Lower leg skin (tissue), 4 donors: ENCODE measurements at regions of chr13 and their contacts with region 1.

Region 1: DNA sequence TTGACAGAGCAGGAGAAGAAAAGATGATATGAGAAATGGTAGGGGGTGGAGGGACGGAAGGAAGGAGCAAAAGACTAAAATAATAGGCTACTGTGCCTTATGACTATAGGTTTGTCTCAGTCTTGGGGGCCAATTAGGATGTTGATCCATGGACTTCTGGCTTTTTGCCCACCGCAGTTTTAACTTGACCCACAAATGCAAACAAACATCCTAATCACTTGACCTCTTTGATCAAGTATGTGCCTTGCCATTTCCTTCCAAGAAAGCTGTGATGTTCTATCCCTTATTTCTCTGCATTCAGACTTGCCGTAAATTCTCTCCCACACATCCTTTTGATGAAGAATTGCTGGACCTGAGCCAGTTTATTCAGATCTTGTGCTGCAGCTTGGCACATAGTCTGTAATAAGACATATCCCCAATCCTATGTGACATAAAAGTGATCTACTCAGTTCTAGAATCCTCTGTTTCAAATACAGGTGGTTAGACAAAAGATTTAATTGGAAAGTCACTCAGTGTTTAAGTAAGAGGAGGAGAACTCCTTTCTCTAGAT is 62.8 kb downstream of the TPT1 start:
- DNase-seq: no peak
- H3K4me3 ChIP-seq: no peak overlapping the region
- CTCF ChIP-seq: no peak
- POLR2A ChIP-seq: no peak

Region 2: DNA sequence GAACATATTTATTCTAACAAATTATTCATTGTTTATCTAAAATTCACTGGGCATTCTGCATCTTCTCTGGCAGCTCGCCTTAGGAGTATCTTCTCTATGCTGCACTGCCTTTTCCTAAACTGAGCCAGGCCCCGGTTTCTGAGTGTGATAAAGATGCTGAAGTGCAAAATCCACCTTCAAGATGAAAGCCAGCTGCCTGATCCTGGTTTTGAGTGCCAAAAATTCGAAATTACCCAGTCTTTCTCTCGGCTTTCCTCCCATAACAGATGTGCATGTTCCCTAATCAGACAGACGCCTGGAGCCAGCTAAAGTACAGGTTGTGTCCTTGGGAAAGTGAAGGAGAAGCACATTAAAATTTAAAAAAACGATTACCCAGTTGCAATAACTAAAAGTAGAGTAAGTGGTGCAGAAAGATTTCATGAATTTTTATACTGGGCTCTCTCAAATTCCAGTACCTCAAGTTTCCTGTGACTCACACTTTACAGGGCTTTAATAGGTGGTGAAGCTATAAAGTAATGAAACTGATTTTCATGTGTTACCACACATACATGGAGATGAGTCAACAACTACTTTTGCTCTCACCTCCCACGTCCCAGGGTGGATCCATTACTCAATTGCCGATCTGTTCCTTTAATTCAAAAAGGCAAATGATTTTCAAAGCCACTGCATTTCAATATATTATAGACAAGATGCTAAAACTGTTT is 222.8 kb before region 1 on chr13:
- intact Hi-C with region 1: loop called (anchors 10 kb)
- DNase-seq: peak in 1 of 2 donors; percentile 27
- H3K4me3 ChIP-seq: no peak overlapping the region
- CTCF ChIP-seq: no peak
- POLR2A ChIP-seq: no peak

Region 3: DNA sequence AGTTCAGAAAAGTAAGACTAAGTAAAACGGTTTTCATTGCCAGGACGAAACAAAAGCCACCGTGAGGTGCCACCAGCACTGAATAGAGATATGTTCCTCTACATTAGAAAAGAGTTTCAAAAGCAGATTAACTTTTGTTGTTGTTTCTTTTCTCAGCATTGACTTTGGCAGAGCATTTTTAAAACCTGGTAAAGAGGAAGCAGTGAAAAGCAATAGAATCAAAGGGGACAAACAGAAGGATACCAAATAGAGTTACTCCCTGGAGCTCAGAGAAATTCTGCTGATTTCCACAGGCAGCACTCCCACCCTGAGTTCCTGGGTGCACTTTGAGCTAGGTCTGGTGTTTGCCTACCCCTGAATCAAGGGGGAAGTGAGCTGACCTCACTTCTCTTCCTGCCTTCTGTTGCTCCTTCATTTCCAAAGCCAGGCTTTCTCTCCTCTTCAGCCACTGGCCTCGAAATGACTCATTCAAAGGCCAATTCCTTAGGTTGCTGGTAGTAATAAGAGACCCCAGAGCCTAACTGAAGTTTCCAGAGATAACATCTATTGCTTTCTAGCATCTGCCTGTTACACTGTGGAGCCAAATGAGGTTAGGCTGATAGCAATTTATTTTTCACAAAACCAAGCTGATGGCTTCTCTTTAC is 348.7 kb after region 1 on chr13:
- intact Hi-C with region 1: no loop called
- DNase-seq: no peak
- H3K4me3 ChIP-seq: no peak overlapping the region
- CTCF ChIP-seq: no peak
- POLR2A ChIP-seq: no peak

Region 4: GRCh38 chr13:46192399-46192798 is 914.2 kb after region 1 on chr13:
- intact Hi-C with region 1: no loop called
- DNase-seq: no peak
- H3K4me3 ChIP-seq: no peak overlapping the region
- CTCF ChIP-seq: no peak
- POLR2A ChIP-seq: no peak